Psoas muscle (tissue), 8 donors: ENCODE measurements at regions of chr17 and their contacts with region 1.

Region 1: DNA sequence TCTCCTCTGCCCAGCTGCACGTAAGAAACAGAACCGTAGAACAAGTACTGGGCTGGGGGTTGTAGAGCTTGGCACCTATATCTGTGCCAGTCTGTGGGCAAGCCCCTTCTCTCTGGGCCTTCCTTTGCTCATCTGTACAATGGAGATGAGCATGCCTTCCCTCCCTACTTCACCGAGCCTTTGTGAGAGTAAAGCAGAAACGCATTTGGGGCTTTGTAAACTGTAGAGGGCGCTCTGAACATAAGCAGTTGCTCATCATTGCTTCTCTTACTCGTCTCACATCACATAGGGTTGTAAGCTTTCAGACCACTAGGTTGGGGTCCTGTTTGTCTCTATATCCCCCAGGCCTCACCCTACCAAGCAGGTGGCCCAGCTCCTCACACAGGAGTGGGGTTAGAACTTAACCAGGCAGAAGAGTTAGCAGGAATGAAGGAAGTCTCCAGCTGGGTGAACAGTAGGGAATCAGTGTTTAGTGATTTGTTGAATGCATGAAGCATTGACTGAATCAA is 15.1 kb downstream of the SAMD14 start:
- DNase-seq: no peak
- ATAC-seq: no peak
- H3K4me3 ChIP-seq: no peak overlapping the region
- H3K27ac ChIP-seq: no peak overlapping the region
- H3K4me1 ChIP-seq: peaks cover 44% of the 10 kb centered on the region
- H3K27me3 ChIP-seq: no peaks in the 10 kb centered on the region
- CTCF ChIP-seq: peak; percentile 55

Region 2: DNA sequence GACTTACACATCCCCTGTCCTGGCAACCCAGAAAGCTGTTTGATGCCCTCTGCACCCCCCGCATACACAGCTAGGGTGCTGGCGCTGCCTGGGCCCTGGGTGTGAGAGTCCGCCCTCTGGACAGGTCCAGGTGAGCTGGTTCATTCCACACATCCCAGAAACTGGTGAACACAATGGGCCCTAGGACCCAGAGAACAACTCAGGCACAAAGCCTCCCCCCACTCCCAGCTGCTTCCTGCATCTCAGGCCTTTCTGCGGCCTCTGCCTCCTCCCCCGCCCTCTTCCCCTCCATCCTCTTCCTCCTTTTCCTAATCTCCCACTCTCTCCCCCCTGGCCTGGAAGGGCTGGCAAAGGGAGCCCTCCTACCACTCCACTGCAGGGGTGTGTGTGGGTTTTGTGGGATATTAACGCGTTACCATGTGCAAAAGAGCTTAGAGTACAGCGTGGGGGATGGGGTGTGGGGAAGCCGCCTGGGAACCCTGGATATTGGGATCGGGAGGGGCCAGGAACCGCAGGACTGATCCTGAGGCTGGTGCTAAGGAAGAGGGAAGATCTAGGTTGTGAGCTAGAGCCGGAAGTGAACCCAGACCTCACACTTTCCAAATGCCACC is 37.1 kb after region 1 on chr17:
- intact Hi-C with region 1: loop called in 1 of 2 experiments (anchors 5 kb)
- DNase-seq: peak; percentile 82 to 86
- ATAC-seq: peak; percentile 53 to 73 (median 66)
- H3K4me3 ChIP-seq: peak overlapping the region; percentile 84
- H3K27ac ChIP-seq: peak overlapping the region; percentile 83
- H3K4me1 ChIP-seq: peaks cover 60% of the 10 kb centered on the region
- H3K27me3 ChIP-seq: no peaks in the 10 kb centered on the region
- CTCF ChIP-seq: no peak

Region 3: GRCh38 chr17:50161023-50161910 is 46.4 kb after region 1 on chr17:
- intact Hi-C with region 1: loop called in 1 of 2 experiments (anchors 2 kb)
- DNase-seq: peak; percentile 94 to 95
- ATAC-seq: peak; percentile 75 to 82 (median 78)
- H3K4me3 ChIP-seq: peak overlapping the region; percentile 76
- H3K27ac ChIP-seq: peak overlapping the region; percentile 66
- H3K4me1 ChIP-seq: peaks cover 33% of the 10 kb centered on the region
- H3K27me3 ChIP-seq: no peaks in the 10 kb centered on the region
- CTCF ChIP-seq: peak; percentile 91

Region 4: GRCh38 chr17:50169121-50169764 is 54.3 kb after region 1 on chr17:
- intact Hi-C with region 1: loop called in 1 of 2 experiments (anchors 5 kb)
- DNase-seq: peak; percentile 41 to 71
- ATAC-seq: peak in 2 of 4 donors; percentile 10
- H3K4me3 ChIP-seq: peak overlapping the region; percentile 71
- H3K27ac ChIP-seq: peak overlapping the region; percentile 80
- H3K4me1 ChIP-seq: peaks cover 64% of the 10 kb centered on the region
- H3K27me3 ChIP-seq: no peaks in the 10 kb centered on the region
- CTCF ChIP-seq: peak; percentile 33